H1 (cell line): ENCODE measurements at regions of chr7 and their contacts with region 1.

Region 1: GRCh38 chr7:94301024-94301586 is 93.6 kb upstream of the COL1A2 start:
- DNase-seq: peak; percentile 57 to 67
- H3K4me3 ChIP-seq: peak overlapping the region in 1 of 4 experiments; percentile 31; a peak in 2 of 8 replicates
- H3K27ac ChIP-seq: 0 out of 2 replicates have a peak overlapping the region, but pooled peaks have one; percentile 17
- H3K4me1 ChIP-seq: peaks cover 3 to 23% (median 8%) of the 10 kb centered on the region in 4 experiments; a peak in 6 of 7 replicates
- H3K27me3 ChIP-seq: peaks cover 0 to 1% (median 0%) of the 10 kb centered on the region in 4 experiments; a peak in 1 of 7 replicates
- CTCF ChIP-seq: peak; percentile 15 to 46 (median 21); a peak in 3 of 4 replicates
- EP300 ChIP-seq: no peak
- POLR2A ChIP-seq: no peak
- RAD21 ChIP-seq: peak; percentile 39 to 47; a peak in 3 of 4 replicates

Region 2: GRCh38 chr7:94205529-94205928 is 95.6 kb before region 1 on chr7:
- CTCF ChIA-PET with region 1: no interaction called
- POLR2A ChIA-PET with region 1: no interaction called
- DNase-seq: no peak
- H3K4me3 ChIP-seq: no peak overlapping the region
- H3K27ac ChIP-seq: no peak overlapping the region
- H3K4me1 ChIP-seq: no peaks in the 10 kb centered on the region
- H3K27me3 ChIP-seq: no peaks in the 10 kb centered on the region
- CTCF ChIP-seq: no peak
- EP300 ChIP-seq: no peak
- POLR2A ChIP-seq: no peak
- RAD21 ChIP-seq: no peak

Region 3: GRCh38 chr7:94252124-94252523 is 49.0 kb before region 1 on chr7:
- CTCF ChIA-PET with region 1: no interaction called
- POLR2A ChIA-PET with region 1: no interaction called
- DNase-seq: no peak
- H3K4me3 ChIP-seq: no peak overlapping the region
- H3K27ac ChIP-seq: no peak overlapping the region
- H3K4me1 ChIP-seq: no peaks in the 10 kb centered on the region
- H3K27me3 ChIP-seq: no peaks in the 10 kb centered on the region
- CTCF ChIP-seq: no peak
- EP300 ChIP-seq: no peak
- POLR2A ChIP-seq: no peak
- RAD21 ChIP-seq: no peak

Region 4: GRCh38 chr7:94355454-94355853 is 54.3 kb after region 1 on chr7:
- CTCF ChIA-PET with region 1: no interaction called
- POLR2A ChIA-PET with region 1: no interaction called
- DNase-seq: no peak
- H3K4me3 ChIP-seq: no peak overlapping the region
- H3K27ac ChIP-seq: no peak overlapping the region
- H3K4me1 ChIP-seq: no peaks in the 10 kb centered on the region
- H3K27me3 ChIP-seq: no peaks in the 10 kb centered on the region
- CTCF ChIP-seq: no peak
- EP300 ChIP-seq: no peak
- POLR2A ChIP-seq: no peak
- RAD21 ChIP-seq: no peak

Region 5: DNA sequence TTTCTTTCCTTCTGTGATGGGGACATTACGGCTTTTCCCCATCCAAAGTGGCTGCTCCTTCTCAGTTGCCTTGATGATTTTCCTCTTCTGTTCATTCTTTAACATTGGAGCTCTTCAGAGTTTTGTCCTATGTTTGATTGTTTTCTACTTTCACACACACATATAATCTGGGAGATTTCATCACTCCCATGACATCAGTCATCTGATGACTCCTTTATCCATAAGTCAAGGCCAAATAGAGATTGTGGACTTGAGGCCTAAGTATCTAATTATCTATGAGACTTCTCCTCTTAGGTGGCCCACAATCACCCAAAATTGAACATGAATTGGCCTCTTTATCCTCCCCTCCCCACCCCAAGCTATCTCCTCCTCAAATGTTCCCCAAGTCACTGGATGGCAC is 88.3 kb after region 1 on chr7:
- CTCF ChIA-PET with region 1: interaction called, 372 read pairs
- POLR2A ChIA-PET with region 1: interaction called, 12 read pairs
- DNase-seq: no peak
- H3K4me3 ChIP-seq: no peak overlapping the region
- H3K27ac ChIP-seq: no peak overlapping the region
- H3K4me1 ChIP-seq: peaks cover 8 to 24% (median 19%) of the 10 kb centered on the region in 4 experiments
- H3K27me3 ChIP-seq: peaks cover 0 to 3% (median 0%) of the 10 kb centered on the region in 4 experiments; a peak in 3 of 7 replicates
- CTCF ChIP-seq: no peak
- EP300 ChIP-seq: no peak
- POLR2A ChIP-seq: no peak
- RAD21 ChIP-seq: no peak

Region 6: GRCh38 chr7:94530109-94530508 is 229.0 kb after region 1 on chr7:
- CTCF ChIA-PET with region 1: no interaction called
- POLR2A ChIA-PET with region 1: no interaction called
- DNase-seq: no peak
- H3K4me3 ChIP-seq: no peak overlapping the region
- H3K27ac ChIP-seq: no peak overlapping the region
- H3K4me1 ChIP-seq: no peaks in the 10 kb centered on the region
- H3K27me3 ChIP-seq: no peaks in the 10 kb centered on the region
- CTCF ChIP-seq: no peak
- EP300 ChIP-seq: no peak
- POLR2A ChIP-seq: no peak
- RAD21 ChIP-seq: no peak